Aorta (tissue), 5 donors: ENCODE measurements at regions of chr13 and their contacts with region 1.

Region 1: GRCh38 chr13:42102961-42103865 is 54.8 kb downstream of the DGKH start:
- DNase-seq: no peak
- ATAC-seq: no peak
- H3K4me3 ChIP-seq: no peak overlapping the region
- H3K27ac ChIP-seq: no peak overlapping the region
- H3K4me1 ChIP-seq: peaks cover 2 to 6% of the 10 kb centered on the region in 2 donors
- H3K27me3 ChIP-seq: no peaks in the 10 kb centered on the region

Region 2: DNA sequence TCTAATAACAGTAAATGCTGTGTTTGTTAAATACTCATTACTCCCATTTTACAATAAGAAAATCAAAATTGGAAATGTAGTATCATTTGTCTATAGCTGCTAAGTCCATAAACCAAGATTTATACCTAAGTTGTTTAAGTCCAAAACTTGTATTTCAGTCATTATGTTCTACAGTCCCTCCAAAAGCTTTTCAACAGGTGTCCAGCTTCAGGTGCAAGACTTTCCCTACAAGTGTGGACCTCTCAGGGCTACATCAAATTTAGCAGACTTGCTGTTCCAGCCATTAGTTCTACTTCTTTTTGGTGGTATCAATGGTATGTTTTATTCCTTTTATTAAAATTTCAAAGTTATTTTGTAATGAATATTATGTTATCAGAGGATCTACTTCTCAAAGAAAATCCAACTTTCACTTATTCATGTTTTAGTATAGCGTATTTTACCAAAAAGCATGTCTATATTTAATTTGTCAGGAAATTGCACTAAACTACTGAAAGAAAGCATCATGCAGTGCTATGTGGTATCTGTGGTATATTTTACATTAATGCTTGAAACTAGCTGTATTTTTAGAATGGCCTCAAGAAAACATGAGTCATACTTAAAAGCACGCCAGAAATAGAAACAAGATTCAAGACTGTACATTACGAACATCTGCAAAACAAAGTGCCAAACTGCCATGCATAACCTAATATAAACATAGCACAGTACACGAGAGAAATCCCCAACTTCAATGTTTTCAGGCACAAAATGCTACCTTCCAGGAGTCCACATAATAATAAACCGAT is 186.8 kb before region 1 on chr13:
- intact Hi-C with region 1: loop called in 1 of 2 experiments (anchors 10 kb)
- DNase-seq: no peak
- ATAC-seq: no peak
- H3K4me3 ChIP-seq: peak overlapping the region in 1 of 2 donors; percentile 8
- H3K27ac ChIP-seq: no peak overlapping the region
- H3K4me1 ChIP-seq: peaks cover 0 to 5% of the 10 kb centered on the region in 2 donors
- H3K27me3 ChIP-seq: no peaks in the 10 kb centered on the region

Region 3: DNA sequence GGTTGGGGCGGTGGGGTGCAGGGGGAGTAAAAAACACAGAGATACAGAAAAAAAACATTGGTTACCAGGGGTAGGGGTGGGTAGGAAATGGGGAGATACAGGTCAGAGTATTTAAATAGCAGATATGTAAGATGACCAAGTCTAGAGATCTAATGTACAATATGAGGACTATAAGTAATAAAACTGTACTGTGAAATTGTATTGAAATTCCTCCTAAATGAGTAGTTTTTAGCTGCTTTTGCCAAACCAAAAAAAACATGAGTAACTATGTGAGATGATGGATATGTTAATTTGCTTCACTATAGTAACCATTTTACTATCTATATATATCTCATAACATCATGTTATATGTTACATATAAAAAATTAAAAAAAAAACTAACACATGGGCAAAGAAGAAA is 171.9 kb before region 1 on chr13:
- intact Hi-C with region 1: no loop called
- DNase-seq: no peak
- ATAC-seq: no peak
- H3K4me3 ChIP-seq: no peak overlapping the region
- H3K27ac ChIP-seq: no peak overlapping the region
- H3K4me1 ChIP-seq: no peaks in the 10 kb centered on the region
- H3K27me3 ChIP-seq: no peaks in the 10 kb centered on the region